CD8-positive, alpha-beta T cell (primary cell): ENCODE measurements at regions of chr10 and their contacts with region 1.

Region 1: DNA sequence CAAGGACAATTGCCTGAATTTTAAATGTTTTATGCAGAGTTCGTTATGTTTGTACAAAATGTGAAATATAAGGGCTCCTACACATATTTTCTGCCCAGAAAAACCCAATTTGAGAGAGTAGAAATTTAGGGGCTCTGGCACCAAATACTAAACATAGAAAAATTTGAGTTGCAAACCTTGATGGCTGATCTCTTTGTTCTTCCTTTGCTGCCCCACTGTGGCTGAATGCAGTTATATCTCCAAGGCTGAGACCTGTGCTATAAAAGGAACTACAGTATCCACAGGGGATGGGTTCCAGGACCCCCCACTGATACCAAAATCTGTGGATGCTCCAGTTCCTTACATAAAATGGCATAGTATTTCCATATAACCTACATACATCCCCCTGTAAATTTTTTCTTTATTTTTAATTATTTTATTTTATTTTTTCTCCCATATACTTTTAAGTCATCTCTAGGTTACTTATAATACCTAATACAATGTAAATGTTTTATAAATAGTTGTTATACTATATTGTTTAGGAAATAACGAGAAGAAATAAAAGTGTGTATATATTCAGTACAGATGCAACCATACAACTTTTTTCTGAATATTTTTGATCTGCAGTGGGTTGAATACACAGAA is 22.5 kb downstream of the CFAP43 start:
- DNase-seq: peak in 7 of 9 experiments; percentile 10 to 65 (median 45)
- ATAC-seq: peak; percentile 71
- H3K4me3 ChIP-seq: no peak overlapping the region
- H3K4me3 Mint-ChIP-seq: no peak overlapping the region
- H3K27ac ChIP-seq: no peak overlapping the region
- H3K27ac Mint-ChIP-seq: no peak overlapping the region
- H3K4me1 ChIP-seq: no peaks in the 10 kb centered on the region
- H3K4me1 Mint-ChIP-seq: no peaks in the 10 kb centered on the region
- H3K27me3 ChIP-seq: no peaks in the 10 kb centered on the region
- H3K27me3 Mint-ChIP-seq: peaks cover 14% of the 10 kb centered on the region
- CTCF ChIP-seq: peak; percentile 54

Region 2: GRCh38 chr10:104002911-104003310 is 206.8 kb before region 1 on chr10:
- CTCF ChIA-PET with region 1: no interaction called
- POLR2A ChIA-PET with region 1: no interaction called
- intact Hi-C with region 1: loop called in 1 of 2 experiments (anchors 10 kb)
- DNase-seq: no peak
- ATAC-seq: no peak
- H3K4me3 ChIP-seq: no peak overlapping the region
- H3K4me3 Mint-ChIP-seq: no peak overlapping the region
- H3K27ac ChIP-seq: no peak overlapping the region
- H3K27ac Mint-ChIP-seq: no peak overlapping the region
- H3K4me1 ChIP-seq: no peaks in the 10 kb centered on the region
- H3K4me1 Mint-ChIP-seq: peaks cover 6% of the 10 kb centered on the region
- H3K27me3 ChIP-seq: no peaks in the 10 kb centered on the region
- H3K27me3 Mint-ChIP-seq: no peaks in the 10 kb centered on the region
- CTCF ChIP-seq: no peak

Region 3: GRCh38 chr10:104028146-104028545 is 181.5 kb before region 1 on chr10:
- CTCF ChIA-PET with region 1: no interaction called
- POLR2A ChIA-PET with region 1: no interaction called
- intact Hi-C with region 1: loop called in 1 of 2 experiments (anchors 10 kb)
- DNase-seq: peak in 2 of 9 experiments; percentile 20 to 29
- ATAC-seq: peak; percentile 49
- H3K4me3 ChIP-seq: no peak overlapping the region
- H3K4me3 Mint-ChIP-seq: no peak overlapping the region
- H3K27ac ChIP-seq: no peak overlapping the region
- H3K27ac Mint-ChIP-seq: peak overlapping the region; percentile 24
- H3K4me1 ChIP-seq: no peaks in the 10 kb centered on the region
- H3K4me1 Mint-ChIP-seq: no peaks in the 10 kb centered on the region
- H3K27me3 ChIP-seq: no peaks in the 10 kb centered on the region
- H3K27me3 Mint-ChIP-seq: no peaks in the 10 kb centered on the region
- CTCF ChIP-seq: no peak